Tibial artery (tissue), 4 donors: ENCODE measurements at regions of chr9 and their contacts with region 1.

Region 1: GRCh38 chr9:127130661-127131538 is 8.5 kb upstream of the ANGPTL2 start:
- DNase-seq: peak; percentile 67 to 76
- H3K4me3 ChIP-seq: no peak overlapping the region
- H3K27ac ChIP-seq: peak overlapping the region; percentile 77 to 82
- H3K4me1 ChIP-seq: peaks cover 0 to 83% (median 51%) of the 10 kb centered on the region in 4 donors
- H3K27me3 ChIP-seq: no peaks in the 10 kb centered on the region
- CTCF ChIP-seq: no peak

Region 2: GRCh38 chr9:127159325-127159801 is 28.5 kb after region 1 on chr9:
- intact Hi-C with region 1: no loop called
- DNase-seq: no peak
- H3K4me3 ChIP-seq: no peak overlapping the region
- H3K27ac ChIP-seq: no peak overlapping the region
- H3K4me1 ChIP-seq: peaks cover 0 to 21% (median 9%) of the 10 kb centered on the region in 4 donors
- H3K27me3 ChIP-seq: no peaks in the 10 kb centered on the region
- CTCF ChIP-seq: no peak

Region 3: DNA sequence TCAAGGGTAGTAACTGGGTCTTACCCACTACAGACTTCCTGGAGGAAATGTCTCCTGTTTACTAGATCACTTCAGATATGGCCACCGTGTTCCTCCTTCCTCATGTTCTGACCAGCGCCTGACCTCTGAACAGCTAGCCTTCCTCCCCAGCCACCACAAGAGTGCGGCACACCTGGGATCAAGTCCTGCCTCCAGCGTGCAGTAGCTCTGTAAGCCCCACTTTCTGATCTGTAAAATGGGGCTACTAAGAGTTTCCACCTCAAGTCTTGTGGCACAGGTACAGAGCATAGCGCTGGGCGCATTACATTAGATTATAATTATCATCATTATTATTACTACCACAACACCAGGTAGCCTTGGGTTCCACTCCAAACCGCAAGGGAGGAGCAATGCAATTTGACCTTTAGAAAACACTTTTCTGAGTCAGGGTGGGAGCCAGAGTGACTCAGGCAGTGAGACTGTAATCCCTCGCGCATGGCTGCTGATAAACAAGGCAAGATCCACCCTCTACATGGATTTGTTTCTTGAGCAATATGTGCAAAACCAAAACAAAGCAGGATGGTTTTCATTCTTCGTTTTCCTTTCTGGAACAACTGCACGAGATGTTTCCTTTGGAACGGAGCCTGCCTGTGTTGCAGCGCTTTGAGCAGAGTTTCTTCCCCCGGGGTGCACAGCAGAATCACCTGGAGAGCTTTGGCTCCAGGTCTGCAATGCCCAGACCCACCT is 56.5 kb after region 1 on chr9:
- intact Hi-C with region 1: loop called (anchors 5 kb)
- DNase-seq: peak; percentile 91
- H3K4me3 ChIP-seq: no peak overlapping the region
- H3K27ac ChIP-seq: peak overlapping the region; percentile 89 to 93
- H3K4me1 ChIP-seq: peaks cover 16 to 43% (median 37%) of the 10 kb centered on the region in 4 donors
- H3K27me3 ChIP-seq: no peaks in the 10 kb centered on the region
- CTCF ChIP-seq: no peak